Left colon (tissue), 2 donors: ENCODE measurements at regions of chr4 and their contacts with region 1.

Region 1: GRCh38 chr4:48779998-48780742 is at the start of gene FRYL:
- DNase-seq: peak; percentile 98 to 100
- ATAC-seq: peak; percentile 85
- total RNA-seq, gene FRYL: 288 to 437 TPM

Region 2: DNA sequence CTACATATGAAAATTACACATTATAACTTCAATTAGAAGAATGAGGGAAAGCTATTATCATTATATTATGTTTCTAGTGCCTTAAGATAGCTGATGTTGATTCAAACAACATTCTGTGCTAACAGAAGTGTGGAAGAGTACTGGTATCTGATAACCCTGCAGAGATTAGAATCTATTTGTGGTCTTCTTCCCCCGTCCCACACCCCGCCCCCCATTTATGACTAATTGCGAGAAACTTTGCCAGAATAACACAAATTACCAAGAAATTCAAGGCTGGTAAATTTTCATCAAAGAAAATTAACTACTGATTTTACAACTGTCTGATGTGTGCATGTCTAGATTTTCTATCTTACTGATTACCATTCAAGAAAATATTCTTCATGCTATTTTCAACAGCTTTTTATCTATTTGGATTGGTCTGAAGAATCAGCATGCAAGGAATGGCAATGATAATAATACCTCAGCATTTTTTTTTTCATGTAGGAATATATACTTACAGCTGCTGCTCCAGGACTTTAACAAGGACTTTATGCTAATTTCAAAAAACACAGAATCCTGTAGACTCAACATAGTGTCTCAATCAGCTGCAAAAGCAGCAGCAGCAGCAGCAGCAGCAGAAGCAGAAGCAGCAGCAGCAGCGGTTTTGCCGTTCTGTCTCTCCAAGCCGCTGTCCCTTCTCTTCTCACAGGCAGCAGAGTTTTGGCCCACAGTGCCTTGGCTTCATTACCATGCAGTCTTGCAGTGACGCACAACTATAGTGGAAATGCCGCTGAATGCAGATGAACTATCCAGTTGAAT is 126.8 kb before region 1 on chr4:
- intact Hi-C with region 1: no loop called
- DNase-seq: peak in 1 of 2 donors; percentile 34
- ATAC-seq: peak; percentile 65

Region 3: DNA sequence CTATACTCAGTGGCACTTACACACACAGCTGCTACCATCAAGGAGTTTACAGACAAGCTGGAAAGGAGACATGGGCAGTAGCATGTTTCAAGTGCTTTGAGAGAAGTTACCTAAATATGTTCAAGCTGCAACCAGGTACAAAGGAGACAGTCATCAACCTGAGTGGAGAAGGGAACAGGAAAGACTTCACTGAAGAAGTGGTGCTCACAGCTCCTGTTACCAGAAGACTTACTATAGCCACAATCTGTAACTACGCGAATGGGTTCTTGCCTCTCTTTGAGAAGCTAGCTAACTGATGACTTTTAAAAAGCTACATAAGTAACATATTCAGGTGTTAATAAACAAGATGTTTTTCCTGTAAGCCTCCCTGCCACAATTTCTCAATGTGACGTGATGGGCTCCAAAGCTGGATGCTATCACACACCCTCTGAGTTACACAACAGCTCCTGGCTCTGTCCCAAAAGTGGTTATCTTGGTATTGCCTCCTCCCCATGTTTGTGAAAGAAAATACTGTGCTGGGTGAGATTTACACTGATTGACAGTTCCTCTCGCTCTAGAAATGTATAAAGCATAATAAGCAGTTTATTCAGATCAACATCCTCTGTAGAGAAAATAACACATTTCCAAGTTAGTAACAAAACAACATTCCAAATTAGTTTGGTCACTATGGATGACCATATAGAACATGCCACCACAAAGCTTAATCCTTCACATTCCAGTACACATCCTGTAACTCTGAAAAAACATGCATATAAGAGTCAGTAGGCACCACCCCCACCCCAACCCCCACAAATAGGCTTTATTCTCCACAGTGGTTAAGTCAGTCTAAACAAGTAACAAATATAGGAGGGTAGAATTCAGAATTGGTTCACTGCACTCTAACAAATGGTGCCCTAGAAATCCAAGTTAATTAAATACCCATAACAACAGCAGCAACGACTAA is 81.9 kb before region 1 on chr4:
- intact Hi-C with region 1: loop called in 1 of 2 experiments (anchors 10 kb)
- DNase-seq: peak; percentile 50 to 52
- ATAC-seq: peak; percentile 80

Region 4: GRCh38 chr4:48830706-48831531 is 50.7 kb after region 1 on chr4 and contains the start of gene OCIAD1:
- intact Hi-C with region 1: loop called in 1 of 2 experiments (anchors 10 kb)
- DNase-seq: peak; percentile 96 to 99
- ATAC-seq: peak; percentile 99
- total RNA-seq, gene OCIAD1: 123 to 129 TPM